PC-9 (cell line): ENCODE measurements at regions of chr12 and their contacts with region 1.

Region 1: GRCh38 chr12:26298785-26299621 is 103.6 kb downstream of the SSPN start:
- DNase-seq: peak; percentile 49 to 84
- H3K4me3 ChIP-seq: peak overlapping the region; percentile 56
- H3K27ac ChIP-seq: peak overlapping the region; percentile 85
- H3K4me1 ChIP-seq: peaks cover 19% of the 10 kb centered on the region
- H3K27me3 ChIP-seq: no peaks in the 10 kb centered on the region
- CTCF ChIP-seq: peak; percentile 62

Region 2: DNA sequence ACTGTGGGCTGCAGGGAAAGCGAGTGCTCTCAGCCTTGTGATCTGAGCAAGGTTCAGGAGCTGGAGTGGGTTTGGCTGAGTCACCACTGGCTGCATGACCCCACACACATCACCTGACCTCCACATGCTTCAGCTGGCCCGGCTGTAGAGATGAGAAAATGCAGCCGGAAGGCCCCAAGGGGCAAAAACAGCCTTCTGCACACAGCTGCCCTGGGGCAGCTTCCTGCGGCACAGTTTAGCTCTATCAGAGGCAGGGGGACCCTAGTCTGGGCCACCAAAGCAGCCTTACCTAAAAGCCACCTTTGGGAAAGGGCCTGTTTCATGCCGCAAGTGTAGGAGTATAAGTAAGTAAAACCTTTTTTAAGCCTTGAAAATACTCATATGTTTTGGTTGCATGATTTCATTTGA is 19.7 kb after region 1 on chr12:
- CTCF ChIA-PET with region 1: interaction called, 4 read pairs
- POLR2A ChIA-PET with region 1: interaction called, 10 read pairs
- intact Hi-C with region 1: no loop called
- DNase-seq: peak in 1 of 2 experiments; percentile 59
- H3K4me3 ChIP-seq: no peak overlapping the region
- H3K27ac ChIP-seq: peak overlapping the region; percentile 16
- H3K4me1 ChIP-seq: peaks cover 21% of the 10 kb centered on the region
- H3K27me3 ChIP-seq: no peaks in the 10 kb centered on the region
- CTCF ChIP-seq: no peak